ENCODE measurements at regions of chr4 and their contacts with region 1.

Region 1: GRCh38 chr4:77819843-77820648 is 878 bp upstream of the CNOT6L start:
- DNase-seq: peak; percentile 97
- H3K4me3 Mint-ChIP-seq: peak overlapping the region; percentile 97
- H3K27ac Mint-ChIP-seq: peak overlapping the region; percentile 94
- H3K4me1 Mint-ChIP-seq: peaks cover 47% of the 10 kb centered on the region
- H3K27me3 Mint-ChIP-seq: peaks cover 2% of the 10 kb centered on the region

Region 2: DNA sequence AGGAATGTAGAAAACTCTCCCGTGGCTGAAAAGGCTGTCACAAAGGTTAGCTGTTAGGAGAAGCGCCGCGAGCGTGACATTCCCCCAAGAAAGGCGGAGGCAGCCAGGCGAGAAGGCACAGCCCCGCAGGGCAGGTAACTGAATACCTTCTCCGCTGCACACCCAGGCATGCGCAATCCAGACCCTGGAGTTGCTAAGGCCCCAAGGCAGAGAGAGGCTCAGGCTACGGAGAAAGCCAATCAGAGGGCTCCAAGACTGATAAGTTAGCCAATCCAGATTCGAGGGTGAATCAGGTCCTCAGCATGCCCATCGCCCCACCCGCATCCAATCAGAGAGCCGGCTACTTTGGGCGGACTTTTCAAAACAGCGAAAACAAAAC is 663.5 kb before region 1 on chr4:
- CTCF ChIA-PET with region 1: no interaction called
- POLR2A ChIA-PET with region 1: no interaction called
- intact Hi-C with region 1: loop called (anchors 1 kb)
- DNase-seq: peak; percentile 97
- H3K4me3 Mint-ChIP-seq: peak overlapping the region; percentile 95
- H3K27ac Mint-ChIP-seq: peak overlapping the region; percentile 94
- H3K4me1 Mint-ChIP-seq: peaks cover 27% of the 10 kb centered on the region
- H3K27me3 Mint-ChIP-seq: no peaks in the 10 kb centered on the region

Region 3: DNA sequence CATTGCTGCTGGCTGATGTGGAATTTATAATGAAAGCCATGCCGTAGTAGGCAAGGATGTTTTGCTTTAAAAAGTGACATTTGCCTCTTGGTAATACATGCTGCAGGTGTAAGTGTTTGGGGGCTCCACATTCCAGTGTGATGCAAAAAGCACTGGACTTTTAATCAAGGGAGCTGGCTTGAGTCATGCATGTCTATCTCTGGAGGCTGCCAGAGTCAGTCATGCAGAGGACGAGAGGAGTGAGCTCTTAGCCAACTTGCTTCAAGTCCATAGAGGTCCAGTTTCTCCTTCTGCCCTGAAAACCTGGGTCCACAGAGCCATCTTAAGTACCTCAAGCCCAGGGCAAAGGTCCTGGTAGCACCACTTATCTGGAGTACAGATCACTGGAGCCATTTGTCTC is 226.1 kb before region 1 on chr4:
- CTCF ChIA-PET with region 1: no interaction called
- POLR2A ChIA-PET with region 1: no interaction called
- intact Hi-C with region 1: loop called (anchors 2 kb)
- DNase-seq: no peak
- H3K4me3 Mint-ChIP-seq: no peak overlapping the region
- H3K27ac Mint-ChIP-seq: peak overlapping the region; percentile 29
- H3K4me1 Mint-ChIP-seq: peaks cover 50% of the 10 kb centered on the region
- H3K27me3 Mint-ChIP-seq: peaks cover 18% of the 10 kb centered on the region

Region 4: GRCh38 chr4:77734928-77735327 is 85.1 kb before region 1 on chr4:
- CTCF ChIA-PET with region 1: interaction called, 5 read pairs
- POLR2A ChIA-PET with region 1: interaction called, 5 read pairs
- intact Hi-C with region 1: loop called (anchors 2 kb)
- DNase-seq: peak; percentile 45
- H3K4me3 Mint-ChIP-seq: peak overlapping the region; percentile 45
- H3K27ac Mint-ChIP-seq: peak overlapping the region; percentile 66
- H3K4me1 Mint-ChIP-seq: peaks cover 44% of the 10 kb centered on the region
- H3K27me3 Mint-ChIP-seq: no peaks in the 10 kb centered on the region

Region 5: GRCh38 chr4:77800483-77801259 is 19.4 kb before region 1 on chr4:
- CTCF ChIA-PET with region 1: interaction called, 3 read pairs
- POLR2A ChIA-PET with region 1: interaction called, 14 read pairs
- intact Hi-C with region 1: loop called (anchors 1 kb)
- DNase-seq: no peak
- H3K4me3 Mint-ChIP-seq: peak overlapping the region; percentile 42
- H3K27ac Mint-ChIP-seq: peak overlapping the region; percentile 85
- H3K4me1 Mint-ChIP-seq: peaks cover 70% of the 10 kb centered on the region
- H3K27me3 Mint-ChIP-seq: no peaks in the 10 kb centered on the region

Region 6: DNA sequence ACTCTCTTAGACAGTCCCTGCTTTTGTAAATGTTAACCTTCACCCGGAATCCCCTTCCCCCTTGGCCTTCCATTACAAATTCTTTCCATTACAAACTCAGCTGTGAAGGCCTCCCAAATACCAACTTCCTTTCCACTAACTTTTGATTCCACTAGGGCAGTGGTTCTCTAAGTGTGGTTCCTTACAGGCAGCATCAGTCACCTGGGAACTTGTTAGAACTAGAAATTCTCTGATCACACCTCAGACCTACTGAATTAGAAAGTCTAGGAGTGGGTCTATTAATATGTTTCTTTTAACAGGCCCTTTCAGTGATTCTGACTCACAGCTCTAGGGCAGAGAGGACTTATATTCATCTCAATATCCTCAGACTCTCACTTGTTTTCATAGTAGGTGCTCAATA is 23.6 kb after region 1 on chr4:
- CTCF ChIA-PET with region 1: no interaction called
- POLR2A ChIA-PET with region 1: interaction called, 6 read pairs
- intact Hi-C with region 1: loop called (anchors 1 kb)
- DNase-seq: no peak
- H3K4me3 Mint-ChIP-seq: no peak overlapping the region
- H3K27ac Mint-ChIP-seq: peak overlapping the region; percentile 60
- H3K4me1 Mint-ChIP-seq: peaks cover 25% of the 10 kb centered on the region
- H3K27me3 Mint-ChIP-seq: no peaks in the 10 kb centered on the region

Region 7: GRCh38 chr4:77852892-77853495 is 32.9 kb after region 1 on chr4:
- CTCF ChIA-PET with region 1: interaction called, 8 read pairs
- POLR2A ChIA-PET with region 1: interaction called, 229 read pairs
- intact Hi-C with region 1: loop called (anchors 1 kb)
- DNase-seq: peak; percentile 83
- H3K4me3 Mint-ChIP-seq: peak overlapping the region; percentile 68
- H3K27ac Mint-ChIP-seq: peak overlapping the region; percentile 98
- H3K4me1 Mint-ChIP-seq: peaks cover 57% of the 10 kb centered on the region
- H3K27me3 Mint-ChIP-seq: no peaks in the 10 kb centered on the region

Measured in activated CD4-positive, alpha-beta memory T cell treated with anti-CD3 and anti-CD28 coated beads for 36 hours (primary cell).